ENCODE measurements at regions of chr2 and their contacts with region 1.

Region 1: GRCh38 chr2:69643602-69644505 is at the start of gene AAK1:
- DNase-seq: peak; percentile 90
- H3K4me3 Mint-ChIP-seq: peak within 1 kb of the TSS; percentile 81
- H3K27ac Mint-ChIP-seq: peak within 1 kb of the TSS; percentile 98
- H3K4me1 Mint-ChIP-seq: peaks cover 47% of the 10 kb centered on the region
- H3K27me3 Mint-ChIP-seq: no peaks in the 10 kb centered on the region
- total RNA-seq, gene AAK1: 77.4 to 79.5 TPM

Region 2: DNA sequence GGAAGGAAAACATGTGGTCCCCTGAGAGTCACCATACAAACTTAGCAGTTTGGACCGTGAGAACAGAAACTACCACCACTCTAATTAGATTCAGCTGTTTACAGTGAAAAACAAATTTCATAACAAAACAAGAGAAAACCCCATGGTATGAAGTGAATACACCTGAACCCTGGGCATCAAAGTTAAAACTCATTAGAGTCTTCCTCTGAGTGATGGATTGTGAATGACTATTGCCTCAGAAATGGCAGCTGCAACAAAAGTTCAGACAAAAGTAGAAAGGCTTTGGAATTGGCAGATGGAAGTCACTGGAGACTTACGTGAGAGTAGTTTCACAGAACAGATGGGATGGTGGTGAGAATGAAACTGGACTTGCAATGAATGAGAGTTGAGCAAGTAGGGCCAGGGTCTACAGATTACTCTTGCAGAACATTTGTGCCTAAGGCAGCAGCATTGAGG is 98.3 kb before region 1 on chr2:
- CTCF ChIA-PET with region 1: no interaction called
- intact Hi-C with region 1: no loop called
- DNase-seq: no peak
- H3K4me3 Mint-ChIP-seq: no peak overlapping the region
- H3K27ac Mint-ChIP-seq: no peak overlapping the region
- H3K4me1 Mint-ChIP-seq: peaks cover 32% of the 10 kb centered on the region
- H3K27me3 Mint-ChIP-seq: no peaks in the 10 kb centered on the region

Region 3: DNA sequence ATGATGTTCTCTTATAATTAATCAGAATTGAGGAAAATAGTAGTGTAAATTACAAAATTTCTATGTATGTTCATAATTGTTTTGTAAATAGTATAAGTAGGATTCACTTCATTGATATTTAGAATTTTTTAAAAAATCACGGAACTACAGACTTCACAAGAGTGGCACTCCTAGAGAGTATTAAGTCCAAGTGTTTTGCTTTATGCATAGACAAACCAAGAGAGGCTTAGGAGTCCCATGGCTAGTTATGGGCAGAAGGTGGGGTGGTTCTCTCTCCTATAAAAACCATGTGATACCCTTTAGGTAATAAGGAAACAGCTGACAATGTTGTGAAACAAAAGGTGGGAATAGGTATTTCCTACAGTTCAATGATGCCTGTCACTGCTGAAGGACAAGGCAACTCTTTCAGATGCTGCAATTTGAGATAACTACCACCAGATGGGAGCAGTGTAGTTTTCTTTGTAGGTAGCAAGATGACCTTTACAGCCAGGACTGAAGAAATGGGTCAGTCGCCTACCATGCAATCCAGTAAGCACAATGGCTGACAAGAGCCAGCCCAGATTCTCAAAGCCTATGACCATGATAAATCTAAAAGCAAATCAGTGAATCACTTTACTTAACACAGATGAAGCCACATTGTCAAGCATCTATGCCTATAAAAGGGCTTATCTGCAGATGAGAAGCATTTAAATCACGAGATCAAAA is 84.3 kb before region 1 on chr2:
- CTCF ChIA-PET with region 1: interaction called, 27 read pairs
- intact Hi-C with region 1: loop called (anchors 1 kb)
- DNase-seq: no peak
- H3K4me3 Mint-ChIP-seq: no peak overlapping the region
- H3K27ac Mint-ChIP-seq: peak overlapping the region; percentile 34
- H3K4me1 Mint-ChIP-seq: peaks cover 78% of the 10 kb centered on the region
- H3K27me3 Mint-ChIP-seq: no peaks in the 10 kb centered on the region

Region 4: DNA sequence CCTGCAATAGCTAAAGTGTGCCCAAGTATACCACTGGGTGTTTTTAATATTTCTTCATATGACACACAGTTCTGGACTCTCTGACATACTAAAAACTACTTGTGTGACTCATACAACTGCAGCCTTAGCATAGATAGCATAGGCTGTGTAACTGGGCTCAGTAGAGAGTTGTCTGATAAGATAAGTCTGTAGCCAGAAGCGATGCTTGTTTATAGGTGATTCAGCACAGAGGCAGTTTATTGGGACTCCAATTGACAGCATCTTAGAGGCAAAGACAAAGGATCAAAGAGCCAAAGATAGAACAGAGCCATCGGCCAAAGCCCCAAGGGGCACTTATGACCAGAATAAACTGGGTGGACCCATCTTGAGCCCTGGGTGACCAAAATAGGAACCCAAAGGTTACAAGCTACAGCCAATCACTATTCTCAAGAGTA is 42.7 kb before region 1 on chr2:
- CTCF ChIA-PET with region 1: interaction called, 3 read pairs
- intact Hi-C with region 1: loop called (anchors 1 kb)
- DNase-seq: peak; percentile 24
- H3K4me3 Mint-ChIP-seq: no peak overlapping the region
- H3K27ac Mint-ChIP-seq: peak overlapping the region; percentile 79
- H3K4me1 Mint-ChIP-seq: peaks cover 92% of the 10 kb centered on the region
- H3K27me3 Mint-ChIP-seq: no peaks in the 10 kb centered on the region

Region 5: GRCh38 chr2:69683101-69683971 is 39.5 kb after region 1 on chr2:
- CTCF ChIA-PET with region 1: interaction called, 7 read pairs
- intact Hi-C with region 1: loop called (anchors 2 kb)
- DNase-seq: no peak
- H3K4me3 Mint-ChIP-seq: peak overlapping the region; percentile 45
- H3K27ac Mint-ChIP-seq: peak overlapping the region; percentile 75
- H3K4me1 Mint-ChIP-seq: peaks cover 64% of the 10 kb centered on the region
- H3K27me3 Mint-ChIP-seq: no peaks in the 10 kb centered on the region

Region 6: DNA sequence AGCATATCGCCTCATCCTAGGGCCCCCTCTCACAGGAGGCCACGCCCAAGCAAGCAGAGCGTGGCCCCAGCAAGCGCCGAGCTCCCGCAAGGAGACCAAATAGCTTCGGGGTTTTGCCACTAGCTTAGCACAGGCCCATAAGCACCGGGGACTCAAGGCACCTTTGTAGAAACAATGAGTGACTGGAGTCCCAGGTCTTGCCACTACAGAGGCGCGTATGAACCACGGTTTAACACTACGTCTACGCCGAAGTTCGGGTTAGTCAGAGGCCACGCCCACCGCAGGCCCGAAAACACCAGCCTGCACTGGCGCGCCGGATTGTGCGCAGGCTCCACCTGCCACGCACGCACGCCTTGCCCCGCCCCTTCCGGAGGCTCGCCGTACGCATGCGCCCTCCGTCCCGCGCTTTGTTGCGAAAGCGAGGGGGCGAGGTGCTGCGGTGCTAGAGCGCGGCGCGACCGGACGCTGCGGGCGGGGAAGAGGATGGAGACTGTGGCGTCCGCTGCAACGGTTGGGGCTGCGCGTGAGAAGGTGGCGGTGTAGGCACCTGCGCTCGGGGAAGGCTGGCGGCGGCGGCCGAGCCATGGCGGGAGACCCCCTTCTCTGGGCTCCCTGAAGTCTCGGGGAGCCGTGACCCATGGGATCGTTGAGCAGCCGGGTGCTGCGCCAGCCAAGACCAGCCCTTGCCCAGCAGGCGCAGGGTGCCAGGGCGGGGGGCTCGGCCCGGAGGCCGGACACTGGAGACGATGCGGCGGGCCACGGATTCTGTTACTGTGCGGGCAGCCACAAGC is 185.6 kb after region 1 on chr2 and contains the start of gene GMCL1:
- CTCF ChIA-PET with region 1: no interaction called
- intact Hi-C with region 1: loop called (anchors 1 kb)
- DNase-seq: peak; percentile 99
- H3K4me3 Mint-ChIP-seq: peak within 1 kb of the TSS; percentile 94
- H3K27ac Mint-ChIP-seq: peak within 1 kb of the TSS; percentile 88
- H3K4me1 Mint-ChIP-seq: peaks cover 51% of the 10 kb centered on the region
- H3K27me3 Mint-ChIP-seq: no peaks in the 10 kb centered on the region
- total RNA-seq, gene GMCL1: 15.9 to 19.4 TPM

Region 7: GRCh38 chr2:70086838-70087701 is 443.2 kb after region 1 on chr2 and contains the start of gene PCBP1:
- CTCF ChIA-PET with region 1: no interaction called
- intact Hi-C with region 1: loop called (anchors 5 kb)
- DNase-seq: peak; percentile 96
- H3K4me3 Mint-ChIP-seq: peak within 1 kb of the TSS; percentile 97
- H3K27ac Mint-ChIP-seq: peak within 1 kb of the TSS; percentile 100
- H3K4me1 Mint-ChIP-seq: peaks cover 50% of the 10 kb centered on the region
- H3K27me3 Mint-ChIP-seq: no peaks in the 10 kb centered on the region
- total RNA-seq, gene PCBP1: 363 to 374 TPM

Region 8: GRCh38 chr2:70104231-70105111 is 460.6 kb after region 1 on chr2:
- CTCF ChIA-PET with region 1: no interaction called
- intact Hi-C with region 1: no loop called
- DNase-seq: peak; percentile 81
- H3K4me3 Mint-ChIP-seq: peak overlapping the region; percentile 72
- H3K27ac Mint-ChIP-seq: peak overlapping the region; percentile 93
- H3K4me1 Mint-ChIP-seq: peaks cover 58% of the 10 kb centered on the region
- H3K27me3 Mint-ChIP-seq: no peaks in the 10 kb centered on the region

Region 9: DNA sequence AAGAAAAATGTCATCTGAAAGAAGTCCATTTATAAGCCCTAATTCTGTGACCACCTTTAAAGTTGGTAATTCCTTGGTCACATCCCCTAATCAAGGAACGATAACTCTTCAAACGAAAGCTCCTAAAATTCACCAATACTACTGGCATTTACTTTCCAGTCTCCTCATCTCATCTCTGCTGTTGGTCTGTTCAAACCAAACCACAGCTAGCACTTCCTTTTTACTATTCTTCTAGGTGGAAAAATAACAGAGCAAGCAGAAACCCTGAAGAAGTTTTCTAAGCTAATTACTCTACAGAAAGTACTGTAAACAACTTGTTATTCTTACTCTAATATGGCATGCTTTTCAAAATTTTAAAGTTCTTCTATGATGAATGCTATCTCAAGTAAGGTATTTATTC is 582.9 kb after region 1 on chr2:
- CTCF ChIA-PET with region 1: no interaction called
- intact Hi-C with region 1: no loop called
- DNase-seq: no peak
- H3K4me3 Mint-ChIP-seq: no peak overlapping the region
- H3K27ac Mint-ChIP-seq: no peak overlapping the region
- H3K4me1 Mint-ChIP-seq: peaks cover 5% of the 10 kb centered on the region
- H3K27me3 Mint-ChIP-seq: no peaks in the 10 kb centered on the region

Region 10: DNA sequence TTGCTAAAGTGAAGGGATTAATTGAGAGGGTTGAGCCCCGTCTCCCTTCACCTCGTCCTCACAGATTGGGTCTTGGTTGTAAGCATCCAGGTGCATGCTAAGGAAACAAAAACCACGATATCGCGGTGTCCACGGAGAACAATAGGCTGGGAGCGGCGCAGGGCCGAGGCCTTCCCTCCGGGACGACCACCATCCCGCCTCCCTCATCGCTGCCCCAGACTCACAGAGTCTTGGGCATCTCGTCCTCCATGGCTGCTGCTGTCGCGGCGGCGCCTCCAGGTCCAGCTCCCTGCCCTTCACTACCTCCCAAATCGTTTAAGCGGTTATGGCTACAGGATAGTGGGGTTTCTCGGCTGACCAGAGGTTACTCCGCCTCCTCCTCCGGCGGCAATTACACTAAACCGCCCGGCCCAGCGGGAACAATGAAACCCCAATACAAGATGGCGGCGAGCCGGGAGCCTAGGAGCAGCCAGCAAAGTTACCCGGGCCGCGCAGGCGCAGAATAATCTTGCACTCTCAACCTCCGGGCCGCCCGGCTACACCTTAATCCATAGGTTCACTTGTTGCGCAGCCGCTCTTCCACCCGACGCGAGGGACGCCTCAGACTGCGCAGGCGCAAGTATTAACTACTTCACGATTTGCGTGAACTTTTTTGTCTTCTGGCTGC is 604.5 kb after region 1 on chr2 and contains the start of gene TIA1:
- CTCF ChIA-PET with region 1: no interaction called
- intact Hi-C with region 1: loop called (anchors 5 kb)
- DNase-seq: peak; percentile 99
- H3K4me3 Mint-ChIP-seq: peak within 1 kb of the TSS; percentile 99
- H3K27ac Mint-ChIP-seq: peak within 1 kb of the TSS; percentile 98
- H3K4me1 Mint-ChIP-seq: peaks cover 32% of the 10 kb centered on the region
- H3K27me3 Mint-ChIP-seq: no peaks in the 10 kb centered on the region
- total RNA-seq, gene TIA1: 83.2 to 83.9 TPM

Measured in activated naive CD4-positive, alpha-beta T cell treated with anti-CD3 and anti-CD28 coated beads for 36 hours (primary cell).